Right ventricle myocardium superior (tissue), 1 donor: ENCODE measurements at regions of chr1 and their contacts with region 1.

Region 1: GRCh38 chr1:93846211-93846991 is 32.6 kb downstream of the DNTTIP2 start:
- DNase-seq: peak; percentile 95
- ATAC-seq: peak; percentile 78

Region 2: DNA sequence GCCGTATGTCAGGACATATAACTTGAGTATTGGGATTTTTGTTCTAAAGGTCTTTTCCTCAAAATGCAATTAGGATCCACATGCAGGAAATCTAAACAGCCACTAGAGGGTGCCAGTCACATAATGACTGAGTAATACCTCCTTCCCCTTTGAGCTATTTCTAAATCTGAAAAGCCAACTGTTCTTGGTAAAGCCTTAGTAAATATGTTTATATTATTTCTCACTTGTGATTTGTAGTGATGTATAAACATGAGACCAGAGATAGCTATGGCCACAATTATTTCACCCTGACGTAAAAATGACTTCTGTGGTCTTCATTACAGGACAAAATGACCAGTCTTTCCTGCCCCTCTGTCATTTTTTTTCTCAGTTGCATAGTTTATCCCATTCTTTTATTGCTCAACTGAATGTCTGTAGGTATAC is 541.7 kb before region 1 on chr1:
- intact Hi-C with region 1: loop called (anchors 10 kb)
- DNase-seq: no peak
- ATAC-seq: peak; percentile 52

Region 3: DNA sequence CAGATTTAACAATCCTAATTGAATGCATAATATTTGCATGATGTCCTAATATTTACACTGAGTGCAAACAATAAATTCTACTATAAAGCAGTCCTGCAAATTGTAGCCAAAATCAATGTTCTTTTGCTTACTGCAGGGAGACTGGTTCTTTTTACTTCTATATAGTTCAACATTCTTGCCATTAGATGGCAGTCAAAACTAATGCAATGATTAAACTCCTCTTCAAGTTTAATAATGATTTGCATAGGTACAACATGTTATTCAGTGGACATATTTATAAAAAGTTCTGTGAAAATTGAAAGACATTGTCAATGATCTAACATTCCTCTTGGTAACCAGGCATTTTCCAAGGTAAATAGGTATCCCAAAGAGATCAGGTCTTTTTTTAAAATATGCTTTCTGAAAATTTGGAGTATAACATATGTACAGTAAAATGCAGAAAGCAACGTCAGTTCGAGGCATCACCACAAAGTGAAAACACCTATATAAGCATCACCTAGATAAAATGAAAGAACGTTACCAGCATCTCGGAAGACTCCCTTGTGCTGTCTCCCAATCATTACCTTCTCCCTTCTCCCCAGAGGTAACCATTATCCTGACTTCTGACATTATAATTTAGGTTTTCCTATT is 408.3 kb before region 1 on chr1:
- intact Hi-C with region 1: loop called (anchors 10 kb)
- DNase-seq: no peak
- ATAC-seq: peak; percentile 73

Region 4: GRCh38 chr1:93552741-93553455 is 293.5 kb before region 1 on chr1:
- intact Hi-C with region 1: loop called (anchors 10 kb)
- DNase-seq: peak; percentile 61
- ATAC-seq: peak; percentile 61

Region 5: DNA sequence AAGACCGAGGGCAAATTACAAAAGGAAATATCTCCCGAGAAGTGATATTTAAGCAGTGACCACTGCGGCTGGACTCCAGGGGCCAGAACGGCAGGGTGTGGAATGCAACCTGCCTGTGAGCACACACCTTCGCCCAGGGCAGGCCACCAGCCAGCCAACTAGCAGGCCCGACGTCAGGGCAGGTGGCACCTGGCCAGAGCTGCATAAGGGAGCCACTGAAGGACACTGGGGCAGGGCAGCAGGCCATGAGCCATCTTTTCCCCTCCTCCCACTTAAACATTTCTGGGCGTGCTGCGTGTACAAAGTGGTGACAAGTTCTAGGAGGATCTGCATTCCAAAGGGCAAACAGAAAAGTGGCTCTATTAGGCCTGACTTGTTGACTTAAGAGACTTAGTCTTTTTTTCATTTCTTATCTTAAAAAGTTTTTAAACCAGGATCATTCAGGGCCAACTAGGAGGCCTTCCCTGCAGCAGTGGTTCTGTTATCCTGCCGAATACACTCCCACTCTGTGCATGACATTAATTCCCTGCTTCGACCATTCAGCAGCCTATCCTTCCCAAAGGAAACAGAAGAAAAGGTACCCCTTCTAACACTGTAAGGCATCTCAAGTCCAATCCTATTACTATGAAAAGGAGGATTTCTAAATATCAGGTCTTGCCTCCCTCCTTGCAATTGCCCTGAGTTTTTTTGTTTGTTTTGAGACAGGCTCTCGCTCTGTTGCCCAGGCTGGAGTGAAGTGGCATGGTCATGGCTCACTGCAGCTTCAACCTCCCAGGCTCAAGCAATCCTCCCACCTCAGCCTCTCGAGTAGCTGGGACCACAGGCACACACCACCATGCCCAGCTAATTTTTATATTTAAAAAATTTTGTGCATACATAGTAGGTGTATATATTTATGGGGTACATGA is 261.1 kb before region 1 on chr1:
- intact Hi-C with region 1: no loop called
- DNase-seq: peak; percentile 95
- ATAC-seq: peak; percentile 92

Region 6: DNA sequence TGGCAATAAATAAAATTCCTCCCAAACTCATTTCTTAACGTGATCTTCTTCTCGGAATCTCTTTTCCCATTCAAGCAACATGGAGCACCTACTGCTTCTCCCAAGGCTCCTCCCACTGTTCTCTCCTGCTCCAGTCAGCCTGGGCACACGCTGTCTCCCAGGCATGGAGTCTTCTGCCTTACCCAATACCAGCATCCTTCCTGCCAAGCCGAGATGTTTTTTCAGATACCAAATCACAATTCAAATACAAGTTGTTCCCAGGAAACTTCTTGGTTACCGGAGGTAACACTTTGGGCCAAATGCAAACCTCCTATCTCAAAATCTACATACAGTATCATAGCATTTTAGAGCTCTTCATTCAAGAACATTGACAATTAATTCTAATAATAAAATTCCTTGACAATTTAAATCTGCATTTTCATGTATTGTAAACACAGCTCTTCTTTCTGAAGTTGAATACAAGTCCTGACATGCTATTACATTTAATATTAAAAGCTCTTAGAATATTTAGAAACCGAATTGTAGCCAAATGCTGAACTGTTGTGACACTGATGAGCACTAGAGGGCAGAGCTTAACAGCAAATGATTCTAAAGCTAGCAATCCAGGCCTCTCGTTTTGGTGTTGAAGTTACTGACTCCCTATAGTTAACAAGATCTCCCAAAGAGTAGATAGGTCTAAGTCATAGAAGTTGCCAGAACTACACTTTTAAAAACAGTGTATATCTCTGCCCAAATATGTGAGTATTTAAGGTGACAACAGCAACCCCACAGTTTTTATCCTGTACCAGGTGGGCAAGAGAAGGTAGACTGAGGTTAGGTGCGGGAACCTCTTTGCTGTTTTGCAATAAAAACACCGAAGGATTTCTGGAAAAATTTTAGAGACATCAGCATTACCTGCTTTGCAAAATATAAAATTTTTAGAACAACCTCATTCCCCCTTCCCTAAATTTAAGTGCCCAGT is 217.0 kb before region 1 on chr1:
- intact Hi-C with region 1: loop called (anchors 10 kb)
- DNase-seq: no peak
- ATAC-seq: peak; percentile 74

Region 7: DNA sequence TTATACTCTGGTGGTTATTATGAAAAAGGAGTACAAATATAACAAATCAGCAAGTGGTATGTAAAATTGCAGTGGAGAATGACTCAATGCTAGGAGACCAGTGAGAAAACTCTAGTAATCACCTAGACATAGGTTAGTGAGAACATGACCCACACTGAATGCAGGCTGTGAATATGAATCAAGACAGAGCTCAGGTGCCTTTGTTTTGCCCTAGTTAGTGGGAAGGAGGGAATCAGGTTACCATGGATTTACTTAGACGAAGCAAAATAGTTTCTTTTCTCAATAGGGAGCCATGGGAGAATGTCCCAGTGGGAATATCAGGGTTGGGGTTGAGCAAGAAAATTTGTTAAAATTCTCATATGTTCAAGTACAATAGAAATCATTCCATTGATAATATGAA is 73.4 kb after region 1 on chr1:
- intact Hi-C with region 1: no loop called
- DNase-seq: no peak
- ATAC-seq: no peak